ENCODE measurements at regions of chr19 and their contacts with region 1.

Region 1: DNA sequence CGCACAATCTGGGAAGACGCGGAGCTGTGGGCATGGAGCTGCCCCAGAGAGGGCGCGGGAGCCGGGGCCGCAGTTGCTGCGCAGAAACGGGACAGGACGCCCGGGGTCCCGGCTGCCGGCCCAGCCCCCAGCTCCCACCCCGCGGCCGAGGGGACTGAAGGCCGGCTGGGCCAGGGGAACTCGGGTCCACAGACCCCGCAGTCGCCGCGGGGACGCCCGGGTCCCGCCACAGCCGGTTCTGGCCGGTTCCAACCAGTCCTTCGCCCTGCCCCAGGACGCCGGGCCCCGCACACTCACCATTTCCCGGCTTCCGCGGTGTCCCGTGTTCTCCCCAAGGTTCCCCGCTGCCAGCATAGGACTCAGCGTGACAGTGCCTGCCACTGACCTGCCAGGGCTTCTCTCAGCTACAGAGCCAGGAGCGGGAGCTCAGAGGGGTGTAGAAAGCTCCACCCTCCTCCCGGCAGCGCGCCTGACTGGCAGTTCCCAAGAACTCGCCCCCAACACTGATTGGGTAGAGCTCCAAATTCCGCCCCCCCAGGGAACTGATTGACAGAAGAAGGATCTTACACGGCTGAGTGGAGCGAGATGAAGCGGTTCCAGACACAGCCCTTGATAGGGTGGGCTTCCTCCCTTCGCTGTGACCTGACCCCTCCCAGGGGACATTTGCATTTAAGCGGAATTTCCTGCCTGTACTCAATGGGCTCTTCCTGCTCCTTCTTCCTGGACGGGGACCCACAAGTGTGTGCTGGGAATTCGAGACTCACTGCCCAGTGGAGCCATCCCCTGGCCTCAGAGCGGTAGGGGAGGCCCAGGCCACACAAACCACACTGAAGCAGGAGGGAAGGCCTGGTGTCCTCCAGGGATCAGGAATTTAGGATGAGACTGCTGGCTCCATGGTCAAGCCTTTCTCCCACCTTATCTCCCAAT is at the start of gene ZNF442:
- DNase-seq: peak; percentile 94 to 99
- ATAC-seq: peak; percentile 98 to 99 (median 99)
- H3K4me3 ChIP-seq: peak within 1 kb of the TSS; percentile 58 to 97 (median 81)
- H3K27ac ChIP-seq: peak within 1 kb of the TSS; percentile 77 to 96 (median 91)
- H3K4me1 ChIP-seq: peaks cover 0 to 22% (median 16%) of the 10 kb centered on the region in 9 donors
- H3K27me3 ChIP-seq: no peaks in the 10 kb centered on the region
- CTCF ChIP-seq: peak; percentile 50 to 85 (median 68)
- total RNA-seq, gene ZNF442: 2.3 to 6.1 (median 4.0) TPM

Region 2: GRCh38 chr19:12194827-12195731 is 170.4 kb before region 1 on chr19:
- intact Hi-C with region 1: loop called in 5 of 10 experiments (anchors 5 to 10 kb)
- DNase-seq: peak; percentile 84 to 90
- ATAC-seq: peak; percentile 96 to 100 (median 99)
- H3K4me3 ChIP-seq: peak overlapping the region; percentile 56 to 87 (median 75)
- H3K27ac ChIP-seq: peak overlapping the region in 9 of 10 donors; percentile 24 to 82 (median 66)
- H3K4me1 ChIP-seq: peaks cover 0 to 12% (median 7%) of the 10 kb centered on the region in 9 donors
- H3K27me3 ChIP-seq: peaks cover 0 to 9% (median 0%) of the 10 kb centered on the region in 7 donors
- CTCF ChIP-seq: peak in 1 of 9 donors; percentile 8

Region 3: DNA sequence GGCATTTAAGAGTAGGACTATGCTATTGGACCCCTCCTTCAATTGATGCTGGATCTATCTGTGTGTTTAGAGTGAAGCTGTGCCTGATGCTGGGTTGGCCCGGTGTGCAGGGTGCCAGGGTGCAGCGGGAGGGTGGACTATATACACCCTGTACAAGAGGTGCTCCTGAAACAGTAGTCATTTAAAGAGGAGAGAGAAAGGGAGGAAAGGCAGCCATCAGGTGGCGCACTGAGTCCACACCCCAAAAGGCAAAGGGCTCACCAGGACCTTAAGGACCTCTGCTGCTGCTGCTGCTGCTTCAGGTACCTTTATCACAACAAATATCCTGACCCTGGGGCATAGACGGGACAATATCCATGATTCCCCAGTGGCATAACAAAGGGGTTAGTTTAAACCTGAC is 163.2 kb before region 1 on chr19:
- intact Hi-C with region 1: loop called in 5 of 10 experiments (anchors 5 to 10 kb)
- DNase-seq: peak; percentile 16 to 29
- ATAC-seq: peak in 5 of 8 donors; percentile 39 to 72 (median 64)
- H3K4me3 ChIP-seq: no peak overlapping the region
- H3K27ac ChIP-seq: no peak overlapping the region
- H3K4me1 ChIP-seq: no peaks in the 10 kb centered on the region
- H3K27me3 ChIP-seq: no peaks in the 10 kb centered on the region
- CTCF ChIP-seq: peak in 7 of 9 donors; percentile 32 to 54 (median 44)

Region 4: DNA sequence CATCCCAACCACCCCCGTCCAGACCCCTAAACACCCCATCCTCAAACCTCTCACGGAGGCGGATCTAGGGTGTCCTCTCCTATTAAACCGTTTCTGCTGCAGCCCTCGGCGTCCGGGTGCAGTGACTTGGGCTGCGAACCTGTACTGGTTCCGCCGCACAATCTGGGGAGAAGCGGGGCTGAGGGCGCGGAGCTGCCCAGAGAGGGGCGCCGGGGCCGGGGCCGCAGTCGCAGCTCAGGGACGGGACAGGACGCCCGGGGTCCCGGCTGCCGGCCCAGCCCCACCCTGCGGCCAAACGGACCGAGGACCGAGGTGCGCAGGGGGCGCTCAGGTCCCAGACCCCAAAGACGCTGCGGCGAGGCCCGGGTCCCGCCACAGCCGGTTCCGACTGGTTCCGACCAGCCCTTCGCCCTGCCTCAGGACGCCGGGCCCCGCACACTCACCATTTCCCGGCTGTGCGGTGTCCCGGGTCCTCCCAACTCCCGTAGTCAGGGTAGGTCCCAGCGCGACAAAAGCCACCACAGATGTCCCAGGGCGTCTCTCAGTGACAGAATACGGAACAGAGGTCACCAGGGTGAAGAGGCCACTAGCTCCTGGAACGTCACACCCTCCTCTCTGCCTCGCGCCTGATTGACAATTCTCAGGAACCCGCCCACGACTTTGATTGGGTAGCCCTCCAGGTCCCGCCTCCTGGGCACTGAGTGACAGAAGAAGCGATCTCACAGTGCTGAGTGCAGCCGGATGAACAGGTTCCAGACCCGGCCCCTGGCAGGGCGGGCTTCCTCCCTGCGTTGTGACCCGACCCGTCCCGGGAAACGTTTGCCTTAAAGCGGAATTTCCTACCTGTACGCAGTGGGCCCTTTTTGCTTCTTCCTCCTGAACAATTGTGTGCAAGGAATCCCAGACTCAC is 71.0 kb before region 1 on chr19 and contains the start of gene ZNF44:
- intact Hi-C with region 1: loop called in 3 of 10 experiments (anchors 1 to 10 kb)
- DNase-seq: peak; percentile 97 to 99
- ATAC-seq: peak; percentile 99 to 100 (median 99)
- H3K4me3 ChIP-seq: peak within 1 kb of the TSS; percentile 75 to 100 (median 94)
- H3K27ac ChIP-seq: peak within 1 kb of the TSS; percentile 95 to 99 (median 97)
- H3K4me1 ChIP-seq: peaks cover 0 to 47% (median 33%) of the 10 kb centered on the region in 9 donors
- H3K27me3 ChIP-seq: no peaks in the 10 kb centered on the region
- CTCF ChIP-seq: no peak
- total RNA-seq, gene ZNF44: 7.5 to 12.7 (median 10.4) TPM

Region 5: GRCh38 chr19:12333162-12334159 is 32.0 kb before region 1 on chr19 and contains the start of gene ZNF563:
- intact Hi-C with region 1: loop called in 5 of 10 experiments (anchors 2 to 5 kb)
- DNase-seq: peak; percentile 97 to 98
- ATAC-seq: peak; percentile 99 to 100 (median 99)
- H3K4me3 ChIP-seq: peak within 1 kb of the TSS; percentile 77 to 98 (median 87)
- H3K27ac ChIP-seq: peak within 1 kb of the TSS; percentile 74 to 98 (median 92)
- H3K4me1 ChIP-seq: peaks cover 0 to 29% (median 18%) of the 10 kb centered on the region in 9 donors
- H3K27me3 ChIP-seq: no peaks in the 10 kb centered on the region
- CTCF ChIP-seq: peak in 1 of 9 donors; percentile 5
- total RNA-seq, gene ZNF563: 2.1 to 6.2 (median 4.5) TPM

Region 6: GRCh38 chr19:12400633-12401502 is 35.4 kb after region 1 on chr19 and contains the start of gene ZNF799:
- intact Hi-C with region 1: loop called in 2 of 10 experiments (anchors 2 kb)
- DNase-seq: peak; percentile 97 to 99
- ATAC-seq: peak; percentile 99 to 100 (median 99)
- H3K4me3 ChIP-seq: peak within 1 kb of the TSS; percentile 61 to 94 (median 88)
- H3K27ac ChIP-seq: peak within 1 kb of the TSS; percentile 16 to 95 (median 87)
- H3K4me1 ChIP-seq: peaks cover 0 to 16% (median 7%) of the 10 kb centered on the region in 9 donors
- H3K27me3 ChIP-seq: no peaks in the 10 kb centered on the region
- CTCF ChIP-seq: peak in 4 of 9 donors; percentile 17 to 37 (median 26)
- total RNA-seq, gene ZNF799: 1.6 to 2.9 (median 2.0) TPM

Region 7: DNA sequence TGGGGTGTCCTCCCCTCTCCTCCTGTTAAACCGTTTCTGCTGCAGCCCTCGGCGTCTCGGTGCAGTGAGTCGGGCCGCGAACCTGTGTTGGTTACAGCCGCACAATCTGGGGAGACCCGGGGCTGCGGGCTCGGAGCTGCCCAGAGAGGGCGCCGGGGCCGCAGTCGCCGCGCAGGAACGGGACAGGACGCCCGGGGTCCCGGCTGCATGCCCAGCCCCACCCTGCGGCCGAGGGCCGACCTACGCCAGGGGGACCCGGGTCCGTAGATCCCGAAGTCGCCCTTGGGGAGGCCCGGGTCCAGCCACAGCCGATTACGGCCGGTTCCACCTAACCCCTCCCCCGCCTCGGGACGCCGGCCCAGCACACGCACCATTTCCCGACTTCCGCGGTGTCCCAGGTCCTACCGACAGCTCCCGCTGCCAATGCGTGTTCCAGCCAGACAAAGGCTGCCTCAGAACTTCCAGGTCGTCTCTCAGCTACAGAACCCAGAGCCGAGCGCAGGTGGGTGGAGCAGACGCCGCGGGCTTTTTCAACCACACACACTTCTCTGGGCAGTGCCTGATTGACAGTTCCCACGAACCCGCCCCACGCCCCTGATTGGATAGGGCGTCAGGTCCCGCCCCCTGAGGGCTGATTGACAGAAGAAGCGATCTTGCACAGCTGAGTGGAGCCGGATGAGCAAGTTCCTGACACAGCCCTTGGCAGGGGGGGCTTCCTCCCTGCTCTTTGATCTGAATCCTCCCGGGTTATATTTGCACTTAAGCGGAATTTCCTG is 75.2 kb after region 1 on chr19 and contains the start of gene ZNF443:
- intact Hi-C with region 1: loop called in 1 of 10 experiments (anchors 1 kb)
- DNase-seq: peak; percentile 99
- ATAC-seq: peak; percentile 100
- H3K4me3 ChIP-seq: peak within 1 kb of the TSS; percentile 33 to 95 (median 71)
- H3K27ac ChIP-seq: peak within 1 kb of the TSS in 9 of 10 donors; percentile 72 to 83 (median 80)
- H3K4me1 ChIP-seq: peaks cover 0 to 12% (median 0%) of the 10 kb centered on the region in 9 donors
- H3K27me3 ChIP-seq: no peaks in the 10 kb centered on the region
- CTCF ChIP-seq: peak in 4 of 9 donors; percentile 12 to 24 (median 17)
- total RNA-seq, gene ZNF443: 1.2 to 3.4 (median 2.5) TPM

Region 8: GRCh38 chr19:12450844-12451243 is 85.3 kb after region 1 on chr19:
- intact Hi-C with region 1: no loop called
- DNase-seq: no peak
- ATAC-seq: no peak
- H3K4me3 ChIP-seq: no peak overlapping the region
- H3K27ac ChIP-seq: no peak overlapping the region
- H3K4me1 ChIP-seq: peaks cover 0 to 11% (median 0%) of the 10 kb centered on the region in 9 donors
- H3K27me3 ChIP-seq: no peaks in the 10 kb centered on the region
- CTCF ChIP-seq: no peak

Measured in heart right ventricle (tissue), 16 donors.